Sigmoid colon (tissue), 7 donors: ENCODE measurements at regions of chr17 and their contacts with region 1.

Region 1: DNA sequence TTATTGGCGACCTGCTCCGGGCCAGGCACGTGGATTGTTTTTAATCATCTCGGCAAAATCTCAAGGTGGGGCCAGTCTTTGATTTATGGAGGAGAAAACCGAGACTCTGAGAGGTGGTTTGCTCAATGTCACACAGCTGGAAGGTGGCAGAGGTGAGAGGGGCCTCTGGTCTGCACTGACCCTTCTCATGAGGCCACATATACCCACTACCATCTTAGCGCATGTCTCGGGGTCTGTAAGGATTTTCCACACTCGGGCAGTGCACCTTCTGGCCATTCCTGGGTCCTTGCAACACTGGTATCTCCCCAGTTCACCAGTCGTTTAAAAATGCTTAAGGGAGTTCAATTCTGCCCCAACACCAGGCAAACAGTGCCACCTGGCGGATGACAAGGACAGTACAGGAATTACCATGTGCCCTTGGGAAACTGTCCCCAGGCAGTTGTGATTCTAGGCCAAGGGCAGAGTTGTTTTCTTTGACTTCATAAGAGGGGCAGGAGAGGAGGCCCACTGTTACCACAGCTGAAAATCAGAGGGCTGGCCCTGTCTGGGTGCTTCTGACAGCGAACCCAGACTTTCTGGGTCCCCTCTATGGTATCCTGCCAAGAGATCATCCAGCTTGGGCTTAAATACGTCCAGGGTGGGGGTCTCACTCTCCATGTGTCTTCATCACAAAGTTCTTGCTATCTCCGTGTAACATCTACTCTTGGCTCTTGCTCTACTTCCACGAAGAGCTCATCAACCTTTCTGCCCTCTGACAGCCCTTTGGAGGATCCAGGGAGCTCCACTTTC is 39.4 kb upstream of the RAI1 start:
- DNase-seq: peak; percentile 87
- H3K4me3 ChIP-seq: no peak overlapping the region
- H3K27ac ChIP-seq: no peak overlapping the region
- H3K4me1 ChIP-seq: no peaks in the 10 kb centered on the region
- H3K27me3 ChIP-seq: no peaks in the 10 kb centered on the region
- CTCF ChIP-seq: peak; percentile 71 to 90 (median 88)
- EP300 ChIP-seq: no peak
- POLR2A ChIP-seq: no peak

Region 2: GRCh38 chr17:17356149-17356930 is 285.5 kb before region 1 on chr17:
- intact Hi-C with region 1: loop called (anchors 1 kb)
- DNase-seq: peak; percentile 81
- H3K4me3 ChIP-seq: no peak overlapping the region
- H3K27ac ChIP-seq: no peak overlapping the region
- H3K4me1 ChIP-seq: peaks cover 0 to 7% (median 4%) of the 10 kb centered on the region in 4 donors
- H3K27me3 ChIP-seq: peaks cover 0 to 13% (median 7%) of the 10 kb centered on the region in 3 donors
- CTCF ChIP-seq: peak; percentile 89 to 99 (median 98)
- EP300 ChIP-seq: no peak
- POLR2A ChIP-seq: no peak

Region 3: GRCh38 chr17:17605729-17606088 is 36.1 kb before region 1 on chr17:
- intact Hi-C with region 1: no loop called
- DNase-seq: no peak
- H3K4me3 ChIP-seq: no peak overlapping the region
- H3K27ac ChIP-seq: no peak overlapping the region
- H3K4me1 ChIP-seq: no peaks in the 10 kb centered on the region
- H3K27me3 ChIP-seq: no peaks in the 10 kb centered on the region
- CTCF ChIP-seq: no peak
- EP300 ChIP-seq: no peak
- POLR2A ChIP-seq: no peak